ENCODE measurements at regions of chr2 and their contacts with region 1.

Region 1: DNA sequence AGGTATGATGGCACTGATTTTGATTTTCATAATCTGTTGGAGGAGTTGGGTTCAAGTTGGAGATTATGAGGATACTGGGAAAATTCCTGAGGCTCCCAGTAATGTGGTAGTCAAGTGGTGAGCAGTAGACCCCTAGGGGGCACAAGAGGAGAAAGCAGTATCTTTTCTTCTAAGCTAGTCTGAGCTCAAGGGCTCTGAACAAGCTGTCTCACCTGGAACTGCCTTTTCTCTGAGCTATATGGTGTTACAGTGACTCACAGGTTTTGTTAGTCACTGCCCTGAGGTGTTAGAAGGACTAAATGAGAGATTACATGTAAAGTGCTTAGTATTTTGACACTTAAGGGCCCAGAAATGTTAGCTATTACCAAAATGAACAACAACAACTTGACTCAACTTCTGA is 42.2 kb downstream of the CD302 start:
- DNase-seq: peak; percentile 70
- ATAC-seq: peak; percentile 82
- H3K4me3 ChIP-seq: no peak overlapping the region
- H3K27ac ChIP-seq: no peak overlapping the region
- H3K4me1 ChIP-seq: no peaks in the 10 kb centered on the region
- H3K27me3 ChIP-seq: no peaks in the 10 kb centered on the region
- CTCF ChIP-seq: peak; percentile 68

Region 2: GRCh38 chr2:159712143-159712928 is 43.5 kb before region 1 on chr2 and contains the start of gene MARCHF7:
- CTCF ChIA-PET with region 1: interaction called, 3 read pairs
- POLR2A ChIA-PET with region 1: no interaction called
- intact Hi-C with region 1: loop called (anchors 2 kb)
- DNase-seq: peak; percentile 94
- ATAC-seq: peak; percentile 81
- H3K4me3 ChIP-seq: peak within 1 kb of the TSS; percentile 100
- H3K27ac ChIP-seq: peak within 1 kb of the TSS; percentile 82
- H3K4me1 ChIP-seq: peaks cover 30% of the 10 kb centered on the region
- H3K27me3 ChIP-seq: no peaks in the 10 kb centered on the region
- CTCF ChIP-seq: peak; percentile 61
- total RNA-seq, gene MARCHF7: 53.2 and 84.3 TPM in 2 replicates

Region 3: DNA sequence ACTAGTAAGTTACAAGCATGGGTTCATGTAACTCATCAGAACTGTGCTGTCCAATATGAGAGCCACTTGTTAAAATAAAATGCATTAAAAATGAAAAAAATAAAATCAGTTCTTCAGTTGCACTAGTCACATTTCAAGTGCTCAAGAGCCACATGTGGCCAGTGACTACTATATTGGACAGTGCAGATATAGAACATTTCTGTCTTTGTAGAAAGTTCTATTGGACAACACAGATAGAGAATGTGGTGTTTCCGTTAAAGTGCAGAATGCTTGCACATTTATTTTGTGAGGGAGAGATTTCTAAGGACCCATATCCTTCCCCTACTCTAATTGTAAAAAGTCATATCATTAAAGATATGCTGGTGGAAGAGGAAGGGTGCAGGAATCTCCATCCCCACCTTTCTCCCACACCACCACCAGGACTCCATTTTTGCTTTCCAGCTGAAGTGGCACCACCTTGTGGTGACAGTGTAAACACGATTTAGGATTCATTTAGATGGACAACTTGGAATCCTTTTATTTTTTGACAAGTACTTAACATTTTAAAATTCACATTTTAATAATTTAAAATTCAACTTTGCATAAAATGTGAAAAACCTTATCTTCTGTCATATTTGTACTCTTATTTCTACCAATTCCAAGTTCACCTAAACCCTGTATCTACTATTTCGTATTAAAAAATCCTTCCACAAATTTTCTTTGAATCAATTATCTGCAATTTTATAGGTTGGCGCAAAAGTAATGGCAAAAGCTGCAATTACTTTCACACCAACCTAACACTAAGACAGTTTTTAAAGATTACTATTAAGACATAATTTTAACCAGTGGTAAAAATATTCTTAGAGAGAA is 51.6 kb after region 1 on chr2:
- CTCF ChIA-PET with region 1: no interaction called
- POLR2A ChIA-PET with region 1: no interaction called
- intact Hi-C with region 1: loop called (anchors 5 kb)
- DNase-seq: peak; percentile 76
- ATAC-seq: peak; percentile 71
- H3K4me3 ChIP-seq: no peak overlapping the region
- H3K27ac ChIP-seq: no peak overlapping the region
- H3K4me1 ChIP-seq: no peaks in the 10 kb centered on the region
- H3K27me3 ChIP-seq: no peaks in the 10 kb centered on the region
- CTCF ChIP-seq: peak; percentile 87

Region 4: GRCh38 chr2:159946326-159946999 is 190.7 kb after region 1 on chr2:
- CTCF ChIA-PET with region 1: no interaction called
- POLR2A ChIA-PET with region 1: no interaction called
- intact Hi-C with region 1: loop called (anchors 1 kb)
- DNase-seq: peak; percentile 89
- ATAC-seq: peak; percentile 90
- H3K4me3 ChIP-seq: 0 out of 2 replicates have a peak overlapping the region, but pooled peaks have one; percentile 2
- H3K27ac ChIP-seq: peak overlapping the region; percentile 68
- H3K4me1 ChIP-seq: peaks cover 25% of the 10 kb centered on the region
- H3K27me3 ChIP-seq: no peaks in the 10 kb centered on the region
- CTCF ChIP-seq: no peak

Measured in PC-3 (cell line).